Activated CD4-positive, alpha-beta T cell treated with anti-CD3 and anti-CD28 coated beads, Interleukin-2, amount 10 ng/mL, durations not matched to agents 24 days and 14 days (primary cell): ENCODE measurements at regions of chr1 and their contacts with region 1.

Region 1: GRCh38 chr1:53196485-53197270 is at the start of gene CPT2:
- DNase-seq: peak; percentile 98
- H3K4me3 Mint-ChIP-seq: peak within 1 kb of the TSS; percentile 88
- H3K27ac Mint-ChIP-seq: peak within 1 kb of the TSS; percentile 96
- H3K4me1 Mint-ChIP-seq: peaks cover 24% of the 10 kb centered on the region
- H3K27me3 Mint-ChIP-seq: no peaks in the 10 kb centered on the region
- total RNA-seq, gene CPT2: 19.5 and 19.9 TPM in 2 replicates

Region 2: DNA sequence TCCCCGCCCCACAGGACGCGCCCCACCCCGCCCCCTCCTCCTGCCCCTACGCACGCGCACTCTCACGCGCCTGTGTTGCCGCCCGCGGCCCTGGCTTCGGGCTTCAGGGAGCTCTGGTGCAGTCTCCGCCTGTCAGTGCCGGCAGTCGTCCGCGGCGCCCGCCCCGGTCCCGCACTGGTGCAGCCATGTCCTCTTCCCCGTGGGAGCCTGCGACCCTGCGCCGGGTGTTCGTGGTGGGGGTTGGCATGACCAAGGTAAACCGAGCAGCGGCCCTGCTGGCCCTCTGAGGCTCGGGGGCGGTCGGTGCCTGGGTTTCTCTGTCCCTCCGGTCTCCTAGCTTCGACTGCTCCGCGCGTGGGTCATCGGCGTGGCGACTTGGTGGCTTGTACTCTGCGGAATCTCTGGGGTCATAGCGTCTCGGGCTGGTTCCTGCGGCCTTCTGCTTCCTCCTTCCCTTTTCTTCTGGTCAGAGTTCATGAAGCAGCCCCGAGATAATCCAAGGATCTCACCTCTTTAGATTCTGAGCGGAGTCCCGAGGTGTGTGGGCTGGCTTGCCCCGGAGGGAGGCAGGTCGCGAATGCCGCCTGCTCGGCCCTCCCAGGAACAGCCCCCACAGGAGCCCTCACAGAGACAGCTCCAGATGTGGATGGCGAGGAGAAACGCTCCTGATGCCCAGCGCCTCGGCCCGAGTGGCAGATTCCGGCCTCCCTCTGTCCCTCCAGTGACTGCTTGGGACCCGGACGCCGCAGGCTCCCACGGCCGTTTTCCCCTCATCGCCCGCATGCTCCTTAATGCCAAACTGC is 269.3 kb before region 1 on chr1 and contains the start of gene SCP2:
- intact Hi-C with region 1: loop called (anchors 5 kb)
- DNase-seq: peak; percentile 95
- H3K4me3 Mint-ChIP-seq: peak within 1 kb of the TSS; percentile 88
- H3K27ac Mint-ChIP-seq: peak within 1 kb of the TSS; percentile 74
- H3K4me1 Mint-ChIP-seq: peaks cover 17% of the 10 kb centered on the region
- H3K27me3 Mint-ChIP-seq: peaks cover 6% of the 10 kb centered on the region
- total RNA-seq, gene SCP2: 60.3 and 61.7 TPM in 2 replicates

Region 3: GRCh38 chr1:53172426-53173128 is 24.1 kb before region 1 on chr1:
- intact Hi-C with region 1: no loop called
- DNase-seq: no peak
- H3K4me3 Mint-ChIP-seq: no peak overlapping the region
- H3K27ac Mint-ChIP-seq: no peak overlapping the region
- H3K4me1 Mint-ChIP-seq: peaks cover 6% of the 10 kb centered on the region
- H3K27me3 Mint-ChIP-seq: peaks cover 24% of the 10 kb centered on the region

Region 4: DNA sequence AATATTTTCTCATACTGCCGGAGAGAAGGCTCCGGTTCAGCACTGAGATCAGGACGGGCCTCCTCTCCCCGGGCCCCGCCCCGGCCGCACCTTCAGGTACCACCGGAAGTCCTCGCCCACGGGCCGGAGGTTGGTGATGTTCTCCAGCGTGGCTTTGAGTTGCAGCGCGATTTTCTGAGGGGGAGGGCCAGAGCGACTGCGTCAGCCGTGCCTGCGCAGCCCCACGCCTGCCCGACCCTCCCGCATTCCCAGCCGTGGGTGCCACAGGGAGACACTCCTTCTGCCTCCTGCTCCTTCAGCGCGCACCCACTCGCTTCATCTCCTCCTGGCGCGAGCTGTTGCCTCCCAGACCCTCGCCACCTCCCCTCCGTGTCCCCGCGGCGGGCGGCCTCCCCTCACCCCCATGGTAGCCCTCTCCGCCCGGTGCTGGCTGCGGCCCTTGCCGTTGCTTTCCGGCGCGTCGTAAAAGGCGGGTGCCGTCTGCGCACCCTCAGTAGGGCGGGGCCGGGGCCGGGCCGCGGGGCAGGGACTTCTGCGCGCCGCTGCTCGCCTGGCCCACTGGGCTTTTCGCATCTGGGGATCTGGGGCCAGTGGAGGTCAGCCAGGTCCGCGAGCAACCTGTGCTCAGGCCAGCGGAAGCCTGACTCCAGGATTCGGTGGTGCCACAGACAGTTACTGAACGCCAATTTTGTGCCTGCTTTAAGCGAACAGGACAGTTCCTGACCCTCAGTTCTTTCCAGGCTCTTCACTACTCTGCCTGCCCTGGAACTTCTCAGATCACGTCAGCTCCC is 23.7 kb after region 1 on chr1 and contains the start of gene CZIB:
- intact Hi-C with region 1: loop called (anchors 1 kb)
- DNase-seq: peak; percentile 99
- H3K4me3 Mint-ChIP-seq: peak within 1 kb of the TSS; percentile 94
- H3K27ac Mint-ChIP-seq: peak within 1 kb of the TSS; percentile 97
- H3K4me1 Mint-ChIP-seq: peaks cover 23% of the 10 kb centered on the region
- H3K27me3 Mint-ChIP-seq: no peaks in the 10 kb centered on the region
- total RNA-seq, gene CZIB: 44.7 and 44.9 TPM in 2 replicates

Region 5: DNA sequence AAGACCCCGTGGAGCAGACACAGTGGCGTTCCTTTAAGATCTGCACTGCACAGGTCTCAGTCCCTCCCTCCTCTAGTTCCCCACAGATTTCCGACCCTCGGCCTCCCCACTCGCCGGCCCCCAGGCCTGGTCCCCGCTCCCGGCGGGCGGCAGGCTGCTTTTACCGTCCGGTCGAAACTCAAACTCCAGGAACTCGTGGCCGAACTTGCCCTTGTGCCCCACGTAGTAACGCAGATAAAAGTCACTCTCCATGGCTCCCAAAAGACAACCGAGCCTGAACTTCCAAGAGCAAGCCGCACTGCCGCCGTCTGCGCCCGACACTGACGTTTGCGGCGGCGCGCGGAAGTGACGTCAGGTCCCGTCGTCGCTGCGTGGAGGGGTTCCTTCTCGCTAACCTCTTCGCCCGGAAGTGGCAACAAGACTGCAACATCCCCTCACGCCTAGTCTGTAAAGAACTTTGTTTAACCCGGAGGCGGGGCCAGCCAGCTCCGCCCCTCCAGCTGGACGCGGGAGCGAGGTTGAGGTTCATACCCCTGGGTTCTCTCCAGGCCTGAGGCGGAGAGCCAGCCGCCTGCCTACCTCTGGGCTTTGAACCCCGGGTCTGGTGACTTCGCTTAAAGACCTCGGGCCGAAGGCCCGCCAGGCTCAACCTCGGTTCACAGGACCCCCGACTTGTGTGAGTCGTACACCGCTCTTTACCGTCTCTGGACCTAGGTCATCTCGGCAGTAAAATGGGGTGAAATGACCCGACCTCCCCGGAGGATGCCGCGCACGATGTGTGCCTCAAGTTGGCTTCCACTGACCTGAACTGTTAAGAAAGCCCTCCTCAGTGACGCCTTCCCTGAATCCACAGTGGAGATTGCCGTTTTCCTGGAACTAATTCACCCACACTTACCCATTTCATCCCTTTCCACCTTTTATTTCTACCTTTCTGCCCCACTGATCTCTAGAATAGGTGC is 41.8 kb after region 1 on chr1 and contains the start of gene MAGOH:
- intact Hi-C with region 1: loop called (anchors 1 kb)
- DNase-seq: peak; percentile 99
- H3K4me3 Mint-ChIP-seq: peak within 1 kb of the TSS; percentile 95
- H3K27ac Mint-ChIP-seq: peak within 1 kb of the TSS; percentile 92
- H3K4me1 Mint-ChIP-seq: peaks cover 24% of the 10 kb centered on the region
- H3K27me3 Mint-ChIP-seq: no peaks in the 10 kb centered on the region
- total RNA-seq, gene MAGOH: 96.4 and 107 TPM in 2 replicates